ENCODE measurements at regions of chr20 and their contacts with region 1.

Region 1: DNA sequence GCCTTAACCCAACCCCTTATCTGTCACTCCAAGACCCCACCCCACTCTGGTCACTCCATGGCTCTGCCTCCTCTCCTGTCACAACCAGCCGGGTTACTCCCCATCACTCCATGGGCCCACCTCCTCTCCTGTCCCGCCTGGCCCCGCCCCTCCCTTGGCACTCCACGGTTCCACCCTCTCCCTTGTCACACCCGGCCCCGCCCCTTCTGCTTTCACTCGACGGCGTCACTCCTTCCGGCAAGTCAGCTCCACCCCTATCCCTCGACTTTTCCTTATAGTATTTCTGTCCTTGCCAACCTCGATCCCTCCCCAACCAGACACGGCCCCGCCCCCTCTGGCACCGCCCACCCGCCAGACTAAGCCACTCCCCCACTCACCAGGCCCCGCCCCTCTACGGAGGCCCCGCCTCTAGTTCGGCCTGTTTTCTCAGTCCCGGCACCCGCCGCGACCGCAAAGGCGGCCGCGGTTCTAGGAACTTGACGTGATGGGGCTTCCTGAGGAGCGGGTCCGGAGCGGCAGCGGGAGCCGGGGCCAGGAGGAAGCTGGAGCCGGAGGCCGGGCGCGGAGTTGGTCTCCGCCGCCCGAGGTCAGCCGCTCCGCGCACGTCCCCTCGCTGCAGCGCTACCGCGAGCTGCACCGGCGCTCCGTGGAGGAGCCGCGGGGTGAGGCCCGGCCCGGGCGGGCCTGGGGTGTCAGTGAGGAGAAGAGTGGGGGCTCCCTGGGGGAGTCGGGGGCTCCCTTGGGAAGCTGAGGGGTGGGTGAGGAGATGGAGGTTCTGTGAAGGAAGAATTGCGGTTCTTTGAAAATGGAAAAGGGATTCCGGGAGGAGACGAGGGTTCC is at the start of gene ACSS2:
- DNase-seq: peak; percentile 97
- ATAC-seq: peak; percentile 88
- H3K4me3 ChIP-seq: peak within 1 kb of the TSS; percentile 67
- H3K27ac ChIP-seq: peak within 1 kb of the TSS; percentile 30
- H3K4me1 ChIP-seq: peaks cover 14% of the 10 kb centered on the region
- H3K27me3 ChIP-seq: no peaks in the 10 kb centered on the region
- CTCF ChIP-seq: no peak
- POLR2A ChIP-seq: peak; percentile 65; the same call in 1 of the 2 replicates
- RAD21 ChIP-seq: no peak
- total RNA-seq, gene ACSS2: 38.9 and 46.4 TPM in 2 replicates

Region 2: DNA sequence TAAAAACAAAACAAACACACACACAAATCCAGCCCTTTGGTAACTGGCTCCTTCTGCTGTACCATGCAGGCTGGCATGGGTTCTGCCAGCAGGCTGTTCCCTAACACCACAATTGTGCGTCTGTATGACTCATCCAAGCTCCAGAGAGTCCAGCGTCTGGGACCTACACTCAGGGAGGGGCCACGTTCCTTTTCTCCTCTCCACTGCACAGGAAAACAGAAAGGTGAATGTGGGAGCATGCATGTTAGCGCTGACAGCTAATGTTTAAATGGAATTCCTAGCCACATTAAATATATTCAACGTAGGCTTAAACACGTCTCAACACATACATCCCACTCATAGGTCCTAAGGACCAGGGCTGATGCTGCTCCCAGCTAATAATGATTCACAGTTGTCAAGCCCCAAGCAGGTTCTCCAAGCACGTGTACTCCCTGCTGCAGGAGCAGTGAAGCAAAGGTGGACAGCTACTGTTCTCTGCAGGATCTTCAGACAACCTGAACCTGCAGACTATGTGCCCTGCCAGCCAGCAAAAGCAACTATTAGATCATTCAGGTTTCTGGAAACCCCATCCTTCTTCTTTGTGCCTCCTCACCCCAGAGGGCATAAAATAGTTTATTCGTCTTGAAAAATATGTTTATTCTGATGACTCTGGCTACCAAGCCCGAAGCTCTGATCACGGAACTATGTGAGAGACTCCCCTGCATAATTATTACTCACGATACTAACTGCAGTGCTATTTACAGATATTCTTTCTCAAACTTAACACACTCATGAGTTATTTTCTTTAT is 297.0 kb before region 1 on chr20:
- CTCF ChIA-PET with region 1: interaction called, 10 read pairs
- POLR2A ChIA-PET with region 1: no interaction called
- dilution Hi-C with region 1: no loop called
- in situ Hi-C with region 1: no loop called
- intact Hi-C with region 1: no loop called
- DNase-seq: peak; percentile 82
- ATAC-seq: peak; percentile 89
- H3K4me3 ChIP-seq: no peak overlapping the region
- H3K27ac ChIP-seq: no peak overlapping the region
- H3K4me1 ChIP-seq: peaks cover 17% of the 10 kb centered on the region
- H3K27me3 ChIP-seq: no peaks in the 10 kb centered on the region
- CTCF ChIP-seq: peak; percentile 84
- POLR2A ChIP-seq: no peak
- RAD21 ChIP-seq: peak; percentile 89

Region 3: GRCh38 chr20:34955232-34956040 is 79.1 kb after region 1 on chr20 and contains the starts of genes GSS and MYH7B:
- CTCF ChIA-PET with region 1: interaction called, 19 read pairs
- POLR2A ChIA-PET with region 1: no interaction called
- dilution Hi-C with region 1: no loop called
- in situ Hi-C with region 1: loop called (anchors 5 kb)
- intact Hi-C with region 1: loop called (anchors 1 kb)
- DNase-seq: peak; percentile 93
- ATAC-seq: peak; percentile 96
- H3K4me3 ChIP-seq: peak within 1 kb of the TSS; percentile 62
- H3K27ac ChIP-seq: peak within 1 kb of the TSS; percentile 88
- H3K4me1 ChIP-seq: peaks cover 4% of the 10 kb centered on the region
- H3K27me3 ChIP-seq: no peaks in the 10 kb centered on the region
- CTCF ChIP-seq: peak; percentile 56
- POLR2A ChIP-seq: peak; percentile 91
- RAD21 ChIP-seq: peak; percentile 70
- total RNA-seq, gene GSS: 70.5 and 90.0 TPM in 2 replicates
- total RNA-seq, gene MYH7B: not detected in 2 replicates

Region 4: GRCh38 chr20:35015206-35016193 is 139.1 kb after region 1 on chr20:
- CTCF ChIA-PET with region 1: no interaction called
- POLR2A ChIA-PET with region 1: no interaction called
- dilution Hi-C with region 1: no loop called
- in situ Hi-C with region 1: no loop called
- intact Hi-C with region 1: loop called (anchors 5 kb)
- DNase-seq: no peak
- ATAC-seq: no peak
- H3K4me3 ChIP-seq: no peak overlapping the region
- H3K27ac ChIP-seq: no peak overlapping the region
- H3K4me1 ChIP-seq: peaks cover 10% of the 10 kb centered on the region
- H3K27me3 ChIP-seq: no peaks in the 10 kb centered on the region
- CTCF ChIP-seq: no peak
- POLR2A ChIP-seq: no peak
- RAD21 ChIP-seq: no peak

Region 5: DNA sequence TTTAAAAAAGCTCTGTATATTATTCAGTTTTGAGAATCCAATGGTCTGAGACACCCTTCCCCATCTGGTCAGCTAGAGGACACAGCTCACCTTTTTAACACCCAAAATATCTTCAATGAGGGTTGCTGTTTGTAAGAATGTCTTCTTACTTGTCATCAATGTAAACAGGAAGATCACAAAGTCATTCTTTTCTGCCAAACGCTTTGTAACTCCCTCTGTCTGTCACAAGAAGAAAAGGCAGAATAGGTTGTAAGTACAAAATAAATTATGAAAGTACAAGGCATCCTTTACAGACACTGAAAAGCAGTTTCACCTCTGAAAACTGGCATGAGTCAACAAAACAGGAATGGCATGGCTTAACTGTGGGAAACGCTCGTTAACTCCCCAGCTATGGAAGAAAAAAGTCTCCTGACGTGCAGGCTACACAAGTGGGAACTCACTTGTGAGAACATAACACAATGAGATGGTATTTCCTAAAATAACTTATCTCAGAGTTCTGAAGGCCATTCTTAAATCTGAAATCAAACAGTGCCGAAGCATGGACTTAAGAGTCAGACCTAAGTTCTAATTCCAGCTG is 173.5 kb after region 1 on chr20:
- CTCF ChIA-PET with region 1: no interaction called
- POLR2A ChIA-PET with region 1: no interaction called
- dilution Hi-C with region 1: no loop called
- in situ Hi-C with region 1: no loop called
- intact Hi-C with region 1: no loop called
- DNase-seq: no peak
- ATAC-seq: no peak
- H3K4me3 ChIP-seq: no peak overlapping the region
- H3K27ac ChIP-seq: no peak overlapping the region
- H3K4me1 ChIP-seq: peaks cover 2% of the 10 kb centered on the region; the same call in 1 of the 2 replicates
- H3K27me3 ChIP-seq: no peaks in the 10 kb centered on the region
- CTCF ChIP-seq: no peak
- POLR2A ChIP-seq: no peak
- RAD21 ChIP-seq: no peak

Region 6: DNA sequence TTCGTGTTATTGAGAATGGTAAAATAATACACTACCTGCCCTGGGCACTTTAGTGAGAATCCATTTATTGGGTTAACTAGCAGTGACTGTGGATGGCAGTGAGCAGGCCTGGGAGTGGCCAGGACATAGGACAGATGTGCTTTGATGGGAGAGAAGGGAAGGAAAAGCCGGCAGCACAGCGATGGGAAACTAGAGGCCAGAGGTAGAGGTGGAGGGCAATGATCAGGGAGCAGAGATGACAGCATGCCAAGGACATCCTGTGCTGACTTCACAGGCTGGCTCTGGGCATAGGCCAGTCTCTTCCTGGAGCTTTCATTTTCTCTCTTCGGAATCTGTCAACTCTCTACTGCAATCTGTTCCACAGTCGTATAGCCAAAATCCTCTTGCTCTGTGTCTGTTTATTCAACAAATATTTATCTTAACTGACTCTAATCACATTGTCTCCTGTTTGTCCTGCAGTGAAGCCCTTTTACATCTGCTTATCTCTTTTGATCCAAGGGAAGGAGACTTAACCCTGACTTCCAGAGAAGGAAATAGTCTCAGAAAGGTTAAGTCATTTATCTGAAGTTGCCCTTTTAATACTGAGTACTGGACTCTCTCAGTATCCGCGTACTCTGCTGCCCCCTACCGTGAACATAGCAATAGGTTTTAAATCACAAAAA is 331.7 kb after region 1 on chr20:
- CTCF ChIA-PET with region 1: no interaction called
- POLR2A ChIA-PET with region 1: no interaction called
- dilution Hi-C with region 1: no loop called
- in situ Hi-C with region 1: no loop called
- intact Hi-C with region 1: loop called (anchors 10 kb)
- DNase-seq: peak; percentile 78
- ATAC-seq: peak; percentile 98
- H3K4me3 ChIP-seq: no peak overlapping the region
- H3K27ac ChIP-seq: peak overlapping the region; percentile 39
- H3K4me1 ChIP-seq: peaks cover 3% of the 10 kb centered on the region; the same call in 1 of the 2 replicates
- H3K27me3 ChIP-seq: no peaks in the 10 kb centered on the region
- CTCF ChIP-seq: peak; percentile 94
- POLR2A ChIP-seq: 0 out of 2 replicates have a peak, but pooled peaks have one; percentile 32
- RAD21 ChIP-seq: peak; percentile 97

Region 7: GRCh38 chr20:35277531-35278395 is 401.4 kb after region 1 on chr20 and contains the start of gene MMP24OS:
- CTCF ChIA-PET with region 1: no interaction called
- POLR2A ChIA-PET with region 1: no interaction called
- dilution Hi-C with region 1: no loop called
- in situ Hi-C with region 1: loop called (anchors 25 kb)
- intact Hi-C with region 1: loop called (anchors 10 kb)
- DNase-seq: peak; percentile 82
- ATAC-seq: peak; percentile 94
- H3K4me3 ChIP-seq: peak within 1 kb of the TSS; percentile 62
- H3K27ac ChIP-seq: peak within 1 kb of the TSS; percentile 97
- H3K4me1 ChIP-seq: peaks cover 6% of the 10 kb centered on the region
- H3K27me3 ChIP-seq: no peaks in the 10 kb centered on the region
- CTCF ChIP-seq: peak; percentile 34; the same call in 1 of the 2 replicates
- POLR2A ChIP-seq: peak; percentile 91
- RAD21 ChIP-seq: peak; percentile 37
- total RNA-seq, gene MMP24OS: 5.9 and 7.2 TPM in 2 replicates